IMR-90 (cell line): ENCODE measurements at regions of chr3 and their contacts with region 1.

Region 1: DNA sequence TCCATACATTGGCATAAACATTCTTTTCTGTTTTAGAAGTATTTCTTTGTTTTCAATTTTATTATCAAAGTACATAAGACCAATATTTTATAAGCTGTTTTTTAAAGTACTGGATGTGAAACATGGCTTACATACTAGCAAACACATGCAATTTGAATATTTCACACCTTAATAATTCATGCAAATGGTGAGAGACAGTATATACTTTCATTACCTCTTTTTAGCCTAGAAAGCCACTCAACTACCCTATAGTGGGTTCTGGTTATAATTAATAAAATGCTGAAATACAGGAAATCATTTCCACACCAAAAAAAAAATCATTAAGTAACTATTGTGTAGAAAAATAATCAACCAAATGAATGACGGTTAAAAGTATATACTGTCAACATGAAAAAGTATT is 38.5 kb upstream of the MELTF start:
- DNase-seq: no peak
- ATAC-seq: no peak
- H3K4me3 ChIP-seq: no peak overlapping the region
- H3K27ac ChIP-seq: no peak overlapping the region
- H3K4me1 ChIP-seq: no peaks in the 10 kb centered on the region
- H3K27me3 ChIP-seq: no peaks in the 10 kb centered on the region
- CTCF ChIP-seq: no peak
- POLR2A ChIP-seq: no peak
- RAD21 ChIP-seq: no peak

Region 2: DNA sequence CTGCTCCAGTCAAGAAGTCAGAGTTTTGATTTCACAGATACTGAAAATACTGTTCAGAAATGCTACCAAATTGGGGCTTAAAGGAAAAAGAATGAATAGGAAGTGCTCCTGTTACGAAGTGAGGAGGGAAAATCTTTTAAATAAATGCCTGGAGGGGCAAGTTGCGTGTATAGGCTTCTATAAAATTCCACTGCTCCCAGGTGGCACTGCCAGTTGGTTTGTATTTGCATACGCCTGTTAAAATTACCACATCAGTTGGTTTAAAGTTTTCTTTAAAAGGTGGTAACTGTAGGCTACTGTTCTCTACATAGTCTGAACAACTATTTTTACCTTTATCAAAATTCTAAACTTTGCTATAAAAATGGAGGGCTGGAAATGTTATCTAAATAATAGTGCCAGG is 106.8 kb after region 1 on chr3:
- CTCF ChIA-PET with region 1: no interaction called
- POLR2A ChIA-PET with region 1: no interaction called
- dilution Hi-C with region 1: no loop called
- in situ Hi-C with region 1: no loop called
- intact Hi-C with region 1: loop called (anchors 5 kb)
- DNase-seq: no peak
- ATAC-seq: no peak
- H3K4me3 ChIP-seq: no peak overlapping the region
- H3K27ac ChIP-seq: no peak overlapping the region
- H3K4me1 ChIP-seq: no peaks in the 10 kb centered on the region
- H3K27me3 ChIP-seq: no peaks in the 10 kb centered on the region
- CTCF ChIP-seq: no peak
- POLR2A ChIP-seq: no peak
- RAD21 ChIP-seq: no peak